MCF 10A (cell line): ENCODE measurements at regions of chr9 and their contacts with region 1.

Region 1: GRCh38 chr9:17116400-17116837 is 18.4 kb upstream of the CNTLN start:
- DNase-seq: peak; percentile 50
- H3K4me3 Mint-ChIP-seq: no peak overlapping the region
- H3K27ac Mint-ChIP-seq: no peak overlapping the region
- H3K4me1 Mint-ChIP-seq: peaks cover 5% of the 10 kb centered on the region
- H3K27me3 Mint-ChIP-seq: no peaks in the 10 kb centered on the region
- CTCF ChIP-seq: peak; percentile 36

Region 2: GRCh38 chr9:17063535-17064135 is 52.8 kb before region 1 on chr9:
- CTCF ChIA-PET with region 1: interaction called, 5 read pairs
- POLR2A ChIA-PET with region 1: no interaction called
- intact Hi-C with region 1: loop called (anchors 5 kb)
- DNase-seq: peak; percentile 72
- H3K4me3 Mint-ChIP-seq: no peak overlapping the region
- H3K27ac Mint-ChIP-seq: no peak overlapping the region
- H3K4me1 Mint-ChIP-seq: no peaks in the 10 kb centered on the region
- H3K27me3 Mint-ChIP-seq: peaks cover 8% of the 10 kb centered on the region
- CTCF ChIP-seq: peak; percentile 74

Region 3: GRCh38 chr9:17134396-17135294 is 18.2 kb after region 1 on chr9 and contains the start of gene CNTLN:
- CTCF ChIA-PET with region 1: interaction called, 8 read pairs
- POLR2A ChIA-PET with region 1: interaction called, 10 read pairs
- intact Hi-C with region 1: no loop called
- DNase-seq: peak; percentile 94
- H3K4me3 Mint-ChIP-seq: peak within 1 kb of the TSS; percentile 95
- H3K27ac Mint-ChIP-seq: peak within 1 kb of the TSS; percentile 93
- H3K4me1 Mint-ChIP-seq: peaks cover 10% of the 10 kb centered on the region
- H3K27me3 Mint-ChIP-seq: no peaks in the 10 kb centered on the region
- CTCF ChIP-seq: no peak
- total RNA-seq, gene CNTLN: 6.7 and 7.4 TPM in 2 replicates

Region 4: DNA sequence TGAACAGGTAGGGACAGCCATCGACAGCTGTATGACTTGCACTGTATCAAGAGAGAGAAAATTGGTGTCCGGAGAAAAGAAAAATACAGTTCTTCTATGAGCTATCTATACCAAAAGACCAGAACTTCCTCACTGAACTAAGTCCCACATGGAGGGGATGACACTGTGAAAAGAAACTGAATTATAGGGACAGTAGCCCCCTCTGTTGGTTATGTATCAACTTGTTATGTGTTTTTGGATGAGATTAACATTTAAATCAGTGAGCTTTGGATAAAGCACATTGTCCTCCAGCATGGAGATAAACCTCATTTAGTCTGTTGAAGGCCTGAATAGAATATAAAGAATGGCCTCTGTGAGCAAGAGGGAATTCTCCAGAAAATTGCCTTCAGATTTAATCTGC is 285.9 kb after region 1 on chr9:
- CTCF ChIA-PET with region 1: interaction called, 3 read pairs
- POLR2A ChIA-PET with region 1: no interaction called
- intact Hi-C with region 1: loop called (anchors 5 kb)
- DNase-seq: peak; percentile 44
- H3K4me3 Mint-ChIP-seq: no peak overlapping the region
- H3K27ac Mint-ChIP-seq: no peak overlapping the region
- H3K4me1 Mint-ChIP-seq: no peaks in the 10 kb centered on the region
- H3K27me3 Mint-ChIP-seq: no peaks in the 10 kb centered on the region
- CTCF ChIP-seq: no peak

Region 5: GRCh38 chr9:17462869-17463464 is 346.5 kb after region 1 on chr9:
- CTCF ChIA-PET with region 1: interaction called, 77 read pairs
- POLR2A ChIA-PET with region 1: interaction called, 3 read pairs
- intact Hi-C with region 1: loop called (anchors 1 kb)
- DNase-seq: peak; percentile 63
- H3K4me3 Mint-ChIP-seq: no peak overlapping the region
- H3K27ac Mint-ChIP-seq: no peak overlapping the region
- H3K4me1 Mint-ChIP-seq: no peaks in the 10 kb centered on the region
- H3K27me3 Mint-ChIP-seq: no peaks in the 10 kb centered on the region
- CTCF ChIP-seq: peak; percentile 55